ENCODE measurements at regions of chr20 and their contacts with region 1.

Region 1: DNA sequence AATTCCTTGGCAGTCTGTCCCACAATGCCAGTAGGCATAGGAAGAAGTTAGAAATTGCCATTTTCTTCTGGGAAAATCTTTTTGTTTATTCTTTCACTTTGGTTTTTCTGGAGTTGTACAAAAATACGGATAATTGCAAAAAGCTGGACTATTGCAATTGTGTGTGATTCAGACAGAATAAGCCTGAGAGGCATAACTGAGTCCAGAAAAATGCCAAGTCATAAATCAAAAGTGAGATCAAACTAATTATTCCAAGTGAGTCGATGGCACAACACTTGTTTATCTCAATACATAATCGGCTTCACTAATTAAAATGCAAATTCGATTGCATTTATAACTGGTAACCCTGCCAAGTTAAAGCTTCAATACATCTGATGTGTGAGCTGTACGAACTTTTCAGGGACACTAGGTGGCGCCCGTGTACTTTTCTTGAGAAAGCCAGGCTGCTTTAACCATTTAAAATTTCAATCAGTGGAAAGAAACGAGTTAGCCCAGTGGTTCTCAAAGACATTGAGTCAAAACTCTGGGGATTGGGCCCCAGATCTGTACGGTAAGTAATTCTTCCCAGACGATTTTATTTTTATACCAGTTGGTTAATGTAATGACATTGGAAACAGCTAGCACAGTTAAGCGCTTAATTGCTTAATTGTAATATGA is 102.6 kb downstream of the LAMP5 start:
- DNase-seq: no peak
- H3K4me3 ChIP-seq: no peak overlapping the region
- H3K27ac ChIP-seq: no peak overlapping the region
- H3K4me1 ChIP-seq: no peaks in the 10 kb centered on the region
- H3K27me3 ChIP-seq: peaks cover 0 to 4% (median 0%) of the 10 kb centered on the region in 4 donors
- CTCF ChIP-seq: peak; percentile 80 to 86 (median 83)
- EP300 ChIP-seq: no peak
- POLR2A ChIP-seq: no peak

Region 2: DNA sequence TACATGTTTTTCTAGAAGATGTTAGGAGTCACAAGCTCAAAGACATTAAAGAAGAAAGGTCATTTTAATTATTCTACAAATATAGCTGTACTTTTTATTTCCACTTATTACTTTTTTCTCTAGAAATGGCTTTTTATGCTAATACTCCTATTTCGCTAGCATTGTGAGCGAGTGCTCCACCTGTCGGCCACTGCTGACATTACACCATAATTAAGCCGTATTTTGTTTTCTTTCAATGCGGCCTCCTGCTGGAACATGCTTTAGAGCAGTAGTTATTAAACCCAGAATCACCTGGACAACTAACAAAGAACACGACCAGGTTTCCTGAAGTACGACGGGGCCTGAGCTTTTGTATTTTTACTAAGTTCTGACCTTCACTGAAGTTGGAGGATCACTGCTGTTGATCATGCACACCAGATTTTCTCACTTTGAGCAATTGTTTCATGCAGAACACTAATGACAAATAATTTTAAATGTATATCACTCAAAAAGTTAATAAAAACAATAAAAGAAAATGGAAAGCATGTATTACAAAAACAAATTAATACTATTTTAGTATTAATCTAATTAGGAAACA is 296.0 kb after region 1 on chr20:
- intact Hi-C with region 1: loop called (anchors 2 kb)
- DNase-seq: no peak
- H3K4me3 ChIP-seq: no peak overlapping the region
- H3K27ac ChIP-seq: no peak overlapping the region
- H3K4me1 ChIP-seq: peaks cover 0 to 2% (median 0%) of the 10 kb centered on the region in 4 donors
- H3K27me3 ChIP-seq: peaks cover 0 to 12% (median 0%) of the 10 kb centered on the region in 4 donors
- CTCF ChIP-seq: peak; percentile 73 to 82 (median 78)
- EP300 ChIP-seq: no peak
- POLR2A ChIP-seq: no peak

Region 3: GRCh38 chr20:10090588-10091166 is 473.7 kb after region 1 on chr20:
- intact Hi-C with region 1: loop called (anchors 5 kb)
- DNase-seq: no peak
- H3K4me3 ChIP-seq: no peak overlapping the region
- H3K27ac ChIP-seq: no peak overlapping the region
- H3K4me1 ChIP-seq: no peaks in the 10 kb centered on the region
- H3K27me3 ChIP-seq: no peaks in the 10 kb centered on the region
- CTCF ChIP-seq: peak; percentile 49 to 72 (median 57)
- EP300 ChIP-seq: no peak
- POLR2A ChIP-seq: no peak

Measured in esophagus muscularis mucosa (tissue), 4 donors.